Sigmoid colon (tissue), 7 donors: ENCODE measurements at regions of chr7 and their contacts with region 1.

Region 1: GRCh38 chr7:73342645-73343044 is 14.7 kb downstream of the FKBP6 start:
- DNase-seq: no peak
- H3K4me3 ChIP-seq: peak overlapping the region in 1 of 4 donors; percentile 29
- H3K27ac ChIP-seq: no peak overlapping the region
- H3K4me1 ChIP-seq: peaks cover 0 to 10% (median 6%) of the 10 kb centered on the region in 4 donors
- H3K27me3 ChIP-seq: peaks cover 0 to 2% (median 0%) of the 10 kb centered on the region in 3 donors
- CTCF ChIP-seq: peak in 3 of 4 experiments; percentile 17 to 64 (median 44)
- EP300 ChIP-seq: no peak
- POLR2A ChIP-seq: no peak

Region 2: DNA sequence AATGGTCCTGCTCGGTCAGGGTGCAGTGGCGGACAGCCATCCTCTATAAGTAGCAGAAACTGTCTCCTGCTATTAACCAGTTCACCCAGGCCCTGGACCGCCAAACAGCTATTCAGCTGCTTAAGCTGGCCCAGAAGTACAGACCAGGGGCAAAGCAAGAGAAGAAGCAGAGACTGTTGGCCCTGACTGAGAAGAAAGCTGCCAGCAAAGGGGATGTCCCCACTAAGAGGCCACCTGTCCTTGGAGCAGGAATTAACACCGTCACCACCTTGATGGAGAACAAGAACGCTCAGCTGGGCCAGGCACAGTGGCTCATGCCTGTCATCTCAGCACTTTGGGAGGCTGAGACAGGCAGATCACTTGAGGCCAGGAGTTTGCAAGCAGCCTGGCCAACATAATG is 28.4 kb before region 1 on chr7:
- intact Hi-C with region 1: no loop called
- DNase-seq: no peak
- H3K4me3 ChIP-seq: no peak overlapping the region
- H3K27ac ChIP-seq: no peak overlapping the region
- H3K4me1 ChIP-seq: peaks cover 0 to 4% (median under 1%) of the 10 kb centered on the region in 4 donors
- H3K27me3 ChIP-seq: no peaks in the 10 kb centered on the region
- CTCF ChIP-seq: no peak
- EP300 ChIP-seq: no peak
- POLR2A ChIP-seq: no peak

Region 3: GRCh38 chr7:73397521-73398281 is 55.1 kb after region 1 on chr7:
- intact Hi-C with region 1: loop called (anchors 10 kb)
- DNase-seq: peak; percentile 69
- H3K4me3 ChIP-seq: peak overlapping the region in 2 of 4 donors; percentile 8 to 22
- H3K27ac ChIP-seq: peak overlapping the region in 1 of 4 donors; percentile 41
- H3K4me1 ChIP-seq: peaks cover 0 to 8% (median 4%) of the 10 kb centered on the region in 4 donors
- H3K27me3 ChIP-seq: no peaks in the 10 kb centered on the region
- CTCF ChIP-seq: no peak
- EP300 ChIP-seq: no peak
- POLR2A ChIP-seq: no peak

Region 4: DNA sequence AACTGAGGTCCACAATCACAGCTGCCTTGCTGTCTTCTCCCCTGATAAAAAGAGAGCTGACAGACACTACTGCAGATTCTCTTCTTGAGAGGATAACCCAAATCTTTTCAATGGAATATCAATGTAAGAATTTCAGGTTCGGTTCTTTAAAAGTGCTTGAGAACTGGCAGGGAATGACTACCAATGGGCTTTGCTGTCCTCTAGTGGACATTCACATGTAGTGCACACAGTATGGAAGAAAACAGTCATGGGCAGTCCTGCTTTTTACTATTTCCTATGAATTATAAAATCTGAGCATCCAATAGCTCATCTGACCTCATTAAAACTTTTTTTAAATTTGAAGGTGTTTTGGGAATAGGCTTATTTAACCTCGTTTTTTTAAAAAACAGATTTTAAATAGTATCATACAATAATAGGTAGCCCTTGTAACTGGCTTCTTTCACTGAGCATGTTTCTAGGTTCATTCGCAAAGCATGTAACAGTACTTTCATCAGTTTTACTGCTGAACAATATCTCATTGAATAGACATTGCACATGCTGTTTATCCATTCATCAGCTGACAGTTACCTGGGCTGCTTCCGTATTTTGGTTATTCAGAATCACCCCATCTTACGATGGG is 109.2 kb after region 1 on chr7:
- intact Hi-C with region 1: loop called (anchors 2 kb)
- DNase-seq: no peak
- H3K4me3 ChIP-seq: no peak overlapping the region
- H3K27ac ChIP-seq: no peak overlapping the region
- H3K4me1 ChIP-seq: peaks cover 0 to 7% (median 0%) of the 10 kb centered on the region in 4 donors
- H3K27me3 ChIP-seq: no peaks in the 10 kb centered on the region
- CTCF ChIP-seq: peak; percentile 79 to 97 (median 94)
- EP300 ChIP-seq: no peak
- POLR2A ChIP-seq: no peak